HepG2 (cell line): ENCODE measurements at regions of chr5 and their contacts with region 1.

Region 1: GRCh38 chr5:90131383-90132133 is 278.0 kb downstream of the CETN3 start:
- DNase-seq: no peak
- ATAC-seq: no peak
- H3K4me3 ChIP-seq: no peak overlapping the region
- H3K27ac ChIP-seq: no peak overlapping the region
- H3K4me1 ChIP-seq: no peaks in the 10 kb centered on the region
- H3K27me3 ChIP-seq: no peaks in the 10 kb centered on the region; a peak in 1 of 5 replicates
- CTCF ChIP-seq: no peak
- EP300 ChIP-seq: no peak
- POLR2A ChIP-seq: no peak
- RAD21 ChIP-seq: no peak

Region 2: GRCh38 chr5:89954916-89955315 is 176.6 kb before region 1 on chr5:
- CTCF ChIA-PET with region 1: no interaction called
- POLR2A ChIA-PET with region 1: no interaction called
- in situ Hi-C with region 1: no loop called
- intact Hi-C with region 1: no loop called
- DNase-seq: no peak
- ATAC-seq: no peak
- H3K4me3 ChIP-seq: no peak overlapping the region
- H3K27ac ChIP-seq: no peak overlapping the region
- H3K4me1 ChIP-seq: no peaks in the 10 kb centered on the region
- H3K27me3 ChIP-seq: no peaks in the 10 kb centered on the region
- CTCF ChIP-seq: no peak
- EP300 ChIP-seq: no peak
- POLR2A ChIP-seq: no peak
- RAD21 ChIP-seq: no peak

Region 3: DNA sequence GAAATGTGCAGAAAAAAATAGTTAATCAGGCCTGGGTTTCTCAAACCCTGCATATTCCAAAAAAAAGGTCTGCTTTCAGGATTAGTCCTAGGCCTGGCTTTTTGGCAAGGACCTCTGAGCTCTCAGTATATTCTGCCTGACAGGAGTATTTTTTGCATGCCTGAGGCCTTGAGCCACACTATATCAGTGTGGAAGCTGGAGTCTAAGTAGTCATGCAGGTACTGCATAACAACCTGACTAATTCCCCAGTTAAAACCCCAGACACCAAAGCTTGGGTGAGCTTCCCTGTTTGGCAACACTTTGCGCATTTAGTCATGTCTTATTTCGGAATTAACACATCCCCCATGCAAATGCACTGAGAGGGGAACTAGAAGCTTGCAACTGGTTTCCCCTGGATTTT is 81.5 kb before region 1 on chr5:
- CTCF ChIA-PET with region 1: no interaction called
- POLR2A ChIA-PET with region 1: no interaction called
- in situ Hi-C with region 1: no loop called
- intact Hi-C with region 1: no loop called
- DNase-seq: no peak
- ATAC-seq: no peak
- H3K4me3 ChIP-seq: no peak overlapping the region
- H3K27ac ChIP-seq: no peak overlapping the region
- H3K4me1 ChIP-seq: no peaks in the 10 kb centered on the region
- H3K27me3 ChIP-seq: no peaks in the 10 kb centered on the region
- CTCF ChIP-seq: no peak
- EP300 ChIP-seq: no peak
- POLR2A ChIP-seq: no peak
- RAD21 ChIP-seq: no peak

Region 4: GRCh38 chr5:90264689-90265544 is 133.4 kb after region 1 on chr5:
- CTCF ChIA-PET with region 1: interaction called, 6 read pairs
- POLR2A ChIA-PET with region 1: no interaction called
- in situ Hi-C with region 1: loop called (anchors 10 kb)
- intact Hi-C with region 1: loop called (anchors 1 kb)
- DNase-seq: peak; percentile 35
- ATAC-seq: peak; percentile 77
- H3K4me3 ChIP-seq: no peak overlapping the region
- H3K27ac ChIP-seq: no peak overlapping the region
- H3K4me1 ChIP-seq: no peaks in the 10 kb centered on the region
- H3K27me3 ChIP-seq: no peaks in the 10 kb centered on the region; a peak in 1 of 5 replicates
- CTCF ChIP-seq: peak; percentile 78
- EP300 ChIP-seq: no peak
- POLR2A ChIP-seq: no peak
- RAD21 ChIP-seq: peak; percentile 69

Region 5: GRCh38 chr5:90440644-90441043 is 309.1 kb after region 1 on chr5:
- CTCF ChIA-PET with region 1: no interaction called
- POLR2A ChIA-PET with region 1: no interaction called
- in situ Hi-C with region 1: no loop called
- intact Hi-C with region 1: no loop called
- DNase-seq: no peak
- ATAC-seq: peak; percentile 33; the same call in 1 of the 3 replicates
- H3K4me3 ChIP-seq: no peak overlapping the region; a peak in 1 of 6 replicates
- H3K27ac ChIP-seq: no peak overlapping the region
- H3K4me1 ChIP-seq: peaks cover 7% of the 10 kb centered on the region
- H3K27me3 ChIP-seq: no peaks in the 10 kb centered on the region
- CTCF ChIP-seq: no peak
- EP300 ChIP-seq: no peak
- POLR2A ChIP-seq: no peak
- RAD21 ChIP-seq: no peak